OCI-LY7 (cell line): ENCODE measurements at regions of chr1 and their contacts with region 1.

Region 1: DNA sequence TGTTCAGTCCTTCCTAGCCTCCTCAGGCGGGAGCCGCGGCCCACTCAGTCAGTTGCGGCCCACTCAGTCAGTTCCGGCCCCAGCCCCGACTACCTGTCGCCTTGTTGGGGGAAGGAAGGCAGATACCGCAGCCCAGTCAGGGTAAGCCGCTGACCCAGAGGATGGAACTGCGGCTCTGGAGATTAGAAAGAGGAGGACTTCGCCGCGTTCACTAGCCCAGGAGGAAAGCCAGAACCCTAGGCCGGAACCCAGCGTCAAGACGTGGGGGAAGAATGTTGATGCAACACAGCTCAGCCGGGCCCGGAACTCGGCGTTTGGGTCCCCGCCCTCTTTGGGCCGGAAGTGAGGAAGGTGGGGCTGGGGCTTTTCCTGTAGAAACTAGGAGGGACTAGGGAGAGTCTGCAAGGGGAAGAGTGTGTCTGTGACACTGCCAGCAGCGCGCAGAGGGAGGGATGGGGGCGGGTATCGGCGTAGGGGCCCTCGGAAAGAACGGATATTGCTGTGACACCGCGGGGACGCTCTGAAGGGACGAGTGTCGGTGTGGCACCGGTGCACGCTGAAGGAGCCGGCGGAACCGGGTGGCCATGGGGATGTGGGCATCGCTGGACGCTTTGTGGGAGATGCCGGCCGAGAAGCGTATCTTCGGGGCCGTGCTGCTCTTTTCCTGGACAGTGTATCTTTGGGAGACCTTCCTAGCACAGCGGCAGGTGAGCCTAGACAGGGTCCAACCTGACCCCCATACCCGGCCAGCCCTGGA is at the start of gene ZMPSTE24:
- DNase-seq: peak; percentile 98
- H3K4me3 ChIP-seq: peak within 1 kb of the TSS; percentile 86
- H3K27ac ChIP-seq: peak within 1 kb of the TSS; percentile 91
- H3K4me1 ChIP-seq: peaks cover 22% of the 10 kb centered on the region
- CTCF ChIP-seq: no peak
- total RNA-seq, gene ZMPSTE24: 13.4 and 15.8 TPM in 2 replicates

Region 2: GRCh38 chr1:40105028-40105427 is 152.8 kb before region 1 on chr1:
- CTCF ChIA-PET with region 1: no interaction called
- POLR2A ChIA-PET with region 1: no interaction called
- intact Hi-C with region 1: no loop called
- DNase-seq: no peak
- H3K4me3 ChIP-seq: no peak overlapping the region
- H3K27ac ChIP-seq: no peak overlapping the region
- H3K4me1 ChIP-seq: no peaks in the 10 kb centered on the region
- CTCF ChIP-seq: no peak

Region 3: GRCh38 chr1:40161125-40161887 is 96.6 kb before region 1 on chr1 and contains the start of gene RLF:
- CTCF ChIA-PET with region 1: no interaction called
- POLR2A ChIA-PET with region 1: interaction called, 6 read pairs
- intact Hi-C with region 1: loop called (anchors 2 kb)
- DNase-seq: peak; percentile 95
- H3K4me3 ChIP-seq: peak within 1 kb of the TSS; percentile 76
- H3K27ac ChIP-seq: peak within 1 kb of the TSS; percentile 50
- H3K4me1 ChIP-seq: peaks cover 29% of the 10 kb centered on the region
- CTCF ChIP-seq: no peak
- total RNA-seq, gene RLF: 14.8 and 16.9 TPM in 2 replicates

Region 4: DNA sequence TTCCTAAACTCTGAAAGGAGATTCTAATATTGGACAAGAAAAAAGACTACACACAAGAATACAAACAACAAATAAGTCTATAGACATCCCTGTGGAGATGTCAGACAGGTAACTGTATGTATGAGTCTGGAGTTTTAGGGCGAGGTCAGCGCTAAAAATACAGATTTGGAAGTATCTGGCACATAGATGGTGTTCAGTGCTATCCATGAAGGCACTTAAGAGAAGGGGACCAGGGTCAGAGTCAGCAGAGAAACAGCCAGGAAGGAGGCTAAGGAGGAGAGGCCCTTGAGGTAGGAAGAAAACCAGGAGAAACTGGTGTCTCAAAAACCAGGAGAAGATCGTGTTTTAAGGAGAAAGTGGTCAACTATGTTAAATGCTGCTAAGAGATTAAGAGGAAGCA is 18.3 kb after region 1 on chr1:
- CTCF ChIA-PET with region 1: no interaction called
- POLR2A ChIA-PET with region 1: no interaction called
- intact Hi-C with region 1: no loop called
- DNase-seq: no peak
- H3K4me3 ChIP-seq: no peak overlapping the region
- H3K27ac ChIP-seq: no peak overlapping the region
- H3K4me1 ChIP-seq: no peaks in the 10 kb centered on the region
- CTCF ChIP-seq: no peak

Region 5: GRCh38 chr1:40315239-40315794 is 57.5 kb after region 1 on chr1:
- CTCF ChIA-PET with region 1: interaction called, 3 read pairs
- POLR2A ChIA-PET with region 1: interaction called, 5 read pairs
- intact Hi-C with region 1: loop called (anchors 2 kb)
- DNase-seq: peak; percentile 93
- H3K4me3 ChIP-seq: peak overlapping the region; percentile 56
- H3K27ac ChIP-seq: peak overlapping the region; percentile 44
- H3K4me1 ChIP-seq: peaks cover 53% of the 10 kb centered on the region
- CTCF ChIP-seq: peak; percentile 87